AG04449 (cell line): ENCODE measurements at regions of chr16 and their contacts with region 1.

Region 1: DNA sequence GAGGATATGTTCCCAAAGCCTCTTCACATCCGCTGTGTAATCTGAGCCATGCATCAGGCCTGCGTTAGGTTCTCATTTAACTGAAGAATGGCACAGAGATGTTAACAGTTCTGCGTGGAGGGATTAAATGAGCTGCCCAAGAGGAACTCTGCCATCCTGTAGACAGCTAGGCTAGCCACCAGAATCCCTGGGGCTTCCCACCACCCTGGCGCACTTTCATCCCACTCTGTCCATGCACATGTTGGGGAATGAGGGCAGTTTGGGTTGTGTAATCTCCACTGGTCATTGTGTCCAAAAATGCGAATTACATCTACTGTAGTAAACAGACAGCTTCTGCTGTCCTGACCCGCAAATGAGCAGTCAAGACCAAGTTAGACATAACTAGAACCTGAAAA is 1.0 kb upstream of the GLG1 start:
- DNase-seq: no peak
- H3K4me3 ChIP-seq: peak overlapping the region; percentile 12; the same call in 1 of the 2 replicates
- CTCF ChIP-seq: no peak

Region 2: GRCh38 chr16:74623214-74623842 is 15.4 kb after region 1 on chr16:
- CTCF ChIA-PET with region 1: interaction called, 10 read pairs
- POLR2A ChIA-PET with region 1: no interaction called
- DNase-seq: no peak
- H3K4me3 ChIP-seq: no peak overlapping the region
- CTCF ChIP-seq: peak; percentile 53